Right cardiac atrium (tissue), 5 donors: ENCODE measurements at regions of chr9 and their contacts with region 1.

Region 1: GRCh38 chr9:38088006-38088925 is 19.2 kb upstream of the SHB start:
- DNase-seq: peak; percentile 74 to 92 (median 89)
- ATAC-seq: peak; percentile 75 to 86
- H3K4me3 ChIP-seq: no peak overlapping the region
- H3K27ac ChIP-seq: no peak overlapping the region
- H3K4me1 ChIP-seq: peaks cover 6% of the 10 kb centered on the region
- H3K27me3 ChIP-seq: no peaks in the 10 kb centered on the region

Region 2: DNA sequence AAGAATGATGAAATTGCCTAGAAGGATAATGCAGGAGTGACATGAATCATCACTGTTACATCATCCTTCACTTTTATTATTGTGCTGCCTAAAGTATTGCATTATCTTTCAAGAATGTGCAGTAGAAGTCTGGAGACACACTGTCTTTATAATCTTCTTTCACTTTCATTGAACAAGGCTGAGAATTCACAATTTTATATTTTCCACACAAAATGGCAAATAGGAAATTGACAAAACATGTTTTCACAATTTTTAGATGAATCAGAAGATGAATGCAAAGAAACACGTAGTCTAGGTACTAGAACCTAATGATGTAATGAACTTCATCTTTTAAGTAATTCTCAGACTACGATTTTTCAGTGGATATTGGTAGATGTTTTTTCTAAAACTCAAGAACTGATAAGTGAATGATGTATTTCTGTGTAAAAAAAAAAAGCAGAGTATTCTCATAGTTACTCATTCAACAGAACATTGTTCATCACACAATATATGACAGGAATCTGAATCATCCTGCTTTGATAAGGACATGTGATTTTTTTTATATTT is 797.3 kb before region 1 on chr9:
- intact Hi-C with region 1: no loop called
- DNase-seq: no peak
- ATAC-seq: peak in 1 of 2 donors; percentile 67
- H3K4me3 ChIP-seq: no peak overlapping the region
- H3K27ac ChIP-seq: no peak overlapping the region
- H3K4me1 ChIP-seq: peaks cover 2% of the 10 kb centered on the region
- H3K27me3 ChIP-seq: no peaks in the 10 kb centered on the region

Region 3: DNA sequence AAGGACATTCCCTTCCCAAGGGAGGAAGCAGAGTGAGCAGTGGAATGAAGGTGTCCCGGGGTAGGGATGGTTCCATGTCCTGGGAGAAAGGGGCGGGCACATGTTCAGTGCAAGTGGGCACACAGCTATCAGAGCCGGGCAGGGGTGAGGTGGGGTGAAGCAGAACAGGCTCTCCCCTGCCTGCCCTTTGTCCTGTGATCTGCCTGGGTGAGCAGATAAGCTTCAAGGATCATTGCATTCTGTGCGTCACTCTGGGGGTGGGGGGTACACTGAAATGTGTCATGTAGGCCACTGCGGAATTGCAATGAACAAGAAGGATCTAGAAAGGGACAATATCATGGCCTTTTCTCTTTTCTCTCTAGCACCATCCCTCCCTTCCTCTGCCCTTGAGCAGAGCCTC is 42.5 kb after region 1 on chr9:
- intact Hi-C with region 1: loop called in 1 of 4 experiments (anchors 10 kb)
- DNase-seq: no peak
- ATAC-seq: peak in 1 of 2 donors; percentile 29
- H3K4me3 ChIP-seq: no peak overlapping the region
- H3K27ac ChIP-seq: no peak overlapping the region
- H3K4me1 ChIP-seq: no peaks in the 10 kb centered on the region
- H3K27me3 ChIP-seq: no peaks in the 10 kb centered on the region

Region 4: DNA sequence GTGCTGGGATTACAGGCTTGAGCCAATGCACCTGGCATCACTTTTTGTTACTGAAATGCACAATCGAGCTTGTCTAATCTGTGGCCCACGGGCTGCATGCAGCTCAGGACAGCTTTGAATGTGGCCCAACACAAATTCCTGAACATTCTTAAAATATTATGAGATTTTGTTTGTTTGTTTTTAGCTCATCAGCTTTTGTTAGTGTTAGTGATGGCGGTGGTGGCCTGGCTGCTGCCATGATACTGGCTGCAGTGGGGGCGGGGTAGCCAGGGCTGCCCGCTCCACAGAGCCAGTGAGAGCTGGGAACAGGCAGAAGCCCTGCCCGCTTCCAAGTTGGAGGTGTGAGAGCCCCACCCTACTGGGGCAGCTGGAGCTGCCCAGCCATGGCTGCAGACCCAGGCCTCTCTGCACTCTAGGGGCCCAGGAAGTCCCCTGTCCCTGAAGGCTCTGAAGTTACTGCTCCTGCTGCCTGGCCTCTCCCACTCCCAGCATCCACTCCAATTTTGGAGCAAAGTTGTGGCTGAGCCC is 57.3 kb after region 1 on chr9:
- intact Hi-C with region 1: no loop called
- DNase-seq: no peak
- ATAC-seq: peak; percentile 18 to 39
- H3K4me3 ChIP-seq: no peak overlapping the region
- H3K27ac ChIP-seq: no peak overlapping the region
- H3K4me1 ChIP-seq: no peaks in the 10 kb centered on the region
- H3K27me3 ChIP-seq: no peaks in the 10 kb centered on the region